H1 (cell line): ENCODE measurements at regions of chr5 and their contacts with region 1.

Region 1: DNA sequence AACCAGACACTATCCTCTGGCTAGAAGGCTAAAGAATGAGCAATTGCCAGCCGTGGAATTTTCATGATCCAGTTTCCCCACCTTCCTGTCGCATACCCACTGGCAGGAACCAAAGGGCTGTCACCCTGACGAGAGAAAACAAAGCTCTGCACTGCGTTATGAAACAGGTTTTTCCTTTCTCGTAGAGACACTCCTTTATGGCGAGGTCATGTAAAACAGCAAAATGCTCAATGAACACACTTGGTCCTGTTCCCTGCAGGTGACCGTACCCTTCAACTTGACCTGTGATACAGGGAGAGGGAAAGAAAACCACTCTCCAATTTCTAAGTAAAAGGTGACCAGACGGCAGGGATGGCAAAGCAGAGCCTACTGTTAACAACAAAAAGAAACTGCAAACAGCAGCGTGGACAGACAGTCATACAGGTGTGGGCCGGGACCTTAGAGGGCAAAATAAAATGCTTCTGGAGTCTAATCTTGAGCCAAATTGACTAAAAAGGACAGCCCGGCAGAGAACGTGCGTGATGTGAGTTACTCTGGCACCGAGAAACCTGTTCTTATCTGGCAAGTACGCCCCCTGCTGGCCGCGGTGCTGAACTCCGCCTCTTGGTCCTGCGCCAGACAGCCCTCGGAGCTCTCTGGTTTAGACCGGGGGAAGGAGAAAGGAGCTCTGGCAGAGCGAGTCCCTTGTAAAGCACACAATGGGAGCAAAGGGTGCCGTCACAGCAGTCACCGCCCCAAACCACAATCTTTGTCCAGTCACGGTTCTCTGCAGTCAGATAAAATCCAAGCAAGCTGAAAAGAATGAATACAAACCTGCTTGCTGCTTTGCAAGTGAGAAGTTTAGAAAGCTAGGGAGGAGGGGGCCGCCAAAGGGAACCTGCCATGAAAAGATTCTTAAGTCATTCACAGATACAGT is 98.9 kb downstream of the EFNA5 start:
- DNase-seq: peak; percentile 92 to 98
- H3K4me3 ChIP-seq: peak overlapping the region in 1 of 4 experiments; percentile 37; a peak in 1 of 8 replicates
- H3K27ac ChIP-seq: no peak overlapping the region; the same call in 1 of the 2 replicates
- H3K4me1 ChIP-seq: peaks cover 2 to 31% (median 22%) of the 10 kb centered on the region in 4 experiments
- H3K27me3 ChIP-seq: no peaks in the 10 kb centered on the region
- CTCF ChIP-seq: peak; percentile 78 to 97 (median 96)
- EP300 ChIP-seq: peak in 1 of 2 experiments; percentile 68; a peak in 1 of 3 replicates
- POLR2A ChIP-seq: no peak; a peak in 1 of 3 replicates
- RAD21 ChIP-seq: peak; percentile 79 to 86

Region 2: GRCh38 chr5:107294211-107294550 is 277.7 kb before region 1 on chr5:
- CTCF ChIA-PET with region 1: no interaction called
- POLR2A ChIA-PET with region 1: no interaction called
- DNase-seq: no peak
- H3K4me3 ChIP-seq: no peak overlapping the region
- H3K27ac ChIP-seq: no peak overlapping the region
- H3K4me1 ChIP-seq: no peaks in the 10 kb centered on the region
- H3K27me3 ChIP-seq: no peaks in the 10 kb centered on the region
- CTCF ChIP-seq: no peak
- EP300 ChIP-seq: no peak
- POLR2A ChIP-seq: no peak
- RAD21 ChIP-seq: no peak

Region 3: DNA sequence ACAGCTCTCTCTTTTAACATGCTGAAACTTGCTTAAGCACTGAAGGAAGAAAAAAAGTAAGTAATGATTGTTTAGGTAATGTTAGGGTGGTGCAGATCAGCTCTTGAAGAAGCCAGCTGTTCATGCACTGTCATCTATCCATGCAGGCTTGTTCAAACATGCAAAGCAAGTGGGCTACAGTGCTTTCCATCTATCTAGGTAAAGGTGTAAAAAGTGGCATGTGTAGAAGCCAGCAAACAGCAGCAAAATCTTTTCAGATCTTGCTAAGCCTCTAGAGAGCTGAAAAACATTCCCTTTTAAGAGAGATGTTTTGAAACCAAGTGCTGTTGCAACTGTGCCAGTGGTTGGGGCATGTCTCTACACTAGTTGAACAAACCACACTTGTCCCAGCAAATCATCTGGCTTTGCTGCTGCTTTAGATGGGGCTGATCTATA is 115.6 kb before region 1 on chr5:
- CTCF ChIA-PET with region 1: interaction called, 15 read pairs
- POLR2A ChIA-PET with region 1: no interaction called
- DNase-seq: no peak
- H3K4me3 ChIP-seq: no peak overlapping the region
- H3K27ac ChIP-seq: no peak overlapping the region
- H3K4me1 ChIP-seq: peaks cover 0 to 11% (median 9%) of the 10 kb centered on the region in 4 experiments; a peak in 4 of 7 replicates
- H3K27me3 ChIP-seq: no peaks in the 10 kb centered on the region
- CTCF ChIP-seq: no peak
- EP300 ChIP-seq: no peak
- POLR2A ChIP-seq: no peak
- RAD21 ChIP-seq: no peak

Region 4: DNA sequence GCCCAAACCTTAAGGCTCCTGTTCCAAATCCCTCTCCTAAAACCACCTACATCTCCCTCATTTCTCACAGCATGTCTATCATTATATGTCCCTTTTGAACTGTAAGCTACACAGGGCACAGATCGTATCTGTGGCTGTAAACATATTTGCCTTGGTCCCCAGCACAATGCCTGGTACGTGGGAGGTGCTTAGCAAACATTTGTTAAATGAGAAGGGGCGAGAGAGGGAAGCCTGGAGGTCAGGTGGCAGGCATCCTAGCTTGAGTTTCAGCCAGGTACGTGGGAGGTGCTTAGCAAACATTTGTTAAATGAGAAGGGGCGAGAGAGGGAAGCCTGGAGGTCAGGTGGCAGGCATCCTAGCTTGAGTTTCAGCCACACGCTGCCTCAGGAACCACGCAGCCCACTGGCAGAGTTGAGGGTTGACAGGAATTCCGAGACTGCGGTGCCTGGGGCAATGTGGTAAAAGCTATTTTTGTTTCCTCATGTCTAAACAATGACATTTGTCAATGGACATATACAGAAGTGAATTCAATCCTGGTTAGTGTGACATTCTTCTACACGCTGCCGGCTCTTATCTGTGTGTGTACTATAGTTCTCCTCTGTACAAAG is 14.7 kb before region 1 on chr5:
- CTCF ChIA-PET with region 1: interaction called, 18 read pairs
- POLR2A ChIA-PET with region 1: interaction called, 3 read pairs
- DNase-seq: peak in 1 of 2 experiments; percentile 46
- H3K4me3 ChIP-seq: no peak overlapping the region
- H3K27ac ChIP-seq: no peak overlapping the region
- H3K4me1 ChIP-seq: peaks cover 0 to 20% (median 5%) of the 10 kb centered on the region in 4 experiments; a peak in 4 of 7 replicates
- H3K27me3 ChIP-seq: no peaks in the 10 kb centered on the region
- CTCF ChIP-seq: no peak
- EP300 ChIP-seq: no peak
- POLR2A ChIP-seq: no peak
- RAD21 ChIP-seq: no peak; a peak in 1 of 4 replicates

Region 5: DNA sequence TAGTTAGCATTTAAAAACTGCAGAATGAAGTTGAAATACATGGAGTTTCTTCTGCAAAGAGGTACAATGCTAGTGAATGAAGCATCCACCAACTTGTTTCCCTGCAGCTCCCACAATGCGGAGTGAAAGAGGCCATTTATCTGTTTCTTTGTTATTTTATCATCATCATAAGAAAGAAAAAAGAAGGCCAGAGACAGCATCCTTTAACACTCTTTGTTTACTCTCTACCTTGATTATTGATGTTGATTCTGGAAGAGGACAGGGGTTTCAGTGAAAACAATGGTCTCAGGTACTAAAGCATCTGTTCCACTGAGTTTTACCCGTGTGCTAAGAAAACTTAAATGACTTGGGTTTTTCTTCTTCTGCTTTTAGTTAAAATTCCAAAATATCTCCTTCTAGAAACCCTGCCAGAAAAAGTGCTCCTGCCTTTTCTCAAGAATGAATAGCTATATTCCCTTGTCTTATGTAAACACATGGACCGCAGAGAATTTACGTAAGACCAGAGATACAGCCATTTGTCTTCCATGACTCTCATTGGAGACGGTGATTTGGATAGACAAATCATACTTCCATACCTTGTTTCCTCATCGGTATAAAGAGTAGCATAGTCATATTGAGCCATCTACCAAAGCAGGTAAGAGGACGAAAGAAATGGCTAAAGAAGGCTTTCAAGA is 17.8 kb after region 1 on chr5:
- CTCF ChIA-PET with region 1: interaction called, 11 read pairs
- POLR2A ChIA-PET with region 1: interaction called, 4 read pairs
- DNase-seq: no peak
- H3K4me3 ChIP-seq: peak overlapping the region in 1 of 4 experiments; percentile 14; a peak in 1 of 8 replicates
- H3K27ac ChIP-seq: no peak overlapping the region
- H3K4me1 ChIP-seq: peaks cover 0 to 12% (median 8%) of the 10 kb centered on the region in 4 experiments; a peak in 5 of 7 replicates
- H3K27me3 ChIP-seq: no peaks in the 10 kb centered on the region
- CTCF ChIP-seq: no peak
- EP300 ChIP-seq: no peak
- POLR2A ChIP-seq: no peak
- RAD21 ChIP-seq: no peak

Region 6: DNA sequence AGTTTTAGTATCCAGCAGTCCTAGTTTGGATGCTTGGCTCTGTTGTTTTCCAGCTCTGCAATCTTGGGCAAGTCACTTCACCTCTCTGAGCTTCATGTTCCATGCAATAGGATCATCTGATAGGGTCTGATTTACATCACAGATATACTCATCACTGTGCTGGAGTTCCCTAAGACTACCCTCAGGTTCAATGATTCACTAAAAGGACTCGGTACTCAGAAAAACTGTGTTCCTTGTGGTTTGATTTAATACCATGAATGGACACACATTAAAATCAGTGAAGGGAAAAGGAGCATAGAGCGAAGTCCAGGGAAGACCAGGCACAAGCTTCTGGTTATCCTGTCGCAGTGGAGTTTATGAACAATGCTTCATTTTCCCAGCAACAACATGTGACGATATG is 218.8 kb after region 1 on chr5:
- CTCF ChIA-PET with region 1: no interaction called
- POLR2A ChIA-PET with region 1: no interaction called
- DNase-seq: no peak
- H3K4me3 ChIP-seq: no peak overlapping the region
- H3K27ac ChIP-seq: no peak overlapping the region
- H3K4me1 ChIP-seq: no peaks in the 10 kb centered on the region
- H3K27me3 ChIP-seq: no peaks in the 10 kb centered on the region
- CTCF ChIP-seq: no peak
- EP300 ChIP-seq: no peak
- POLR2A ChIP-seq: no peak
- RAD21 ChIP-seq: no peak